Activated CD4-positive, alpha-beta memory T cell treated with anti-CD3 and anti-CD28 coated beads, Interleukin-2, amount 10 ng/mL, durations not matched to agents 7 days and 5 days (primary cell): ENCODE measurements at regions of chr2 and their contacts with region 1.

Region 1: GRCh38 chr2:9555297-9556141 is at the start of gene ADAM17:
- DNase-seq: peak; percentile 92
- H3K4me3 Mint-ChIP-seq: peak within 1 kb of the TSS; percentile 97
- H3K27ac Mint-ChIP-seq: peak within 1 kb of the TSS; percentile 94
- H3K4me1 Mint-ChIP-seq: peaks cover 58% of the 10 kb centered on the region
- H3K27me3 Mint-ChIP-seq: no peaks in the 10 kb centered on the region
- total RNA-seq, gene ADAM17: 28.9 to 31.0 TPM

Region 2: GRCh38 chr2:9463698-9464034 is 91.9 kb before region 1 on chr2:
- CTCF ChIA-PET with region 1: no interaction called
- POLR2A ChIA-PET with region 1: no interaction called
- DNase-seq: peak; percentile 56
- H3K4me3 Mint-ChIP-seq: no peak overlapping the region
- H3K27ac Mint-ChIP-seq: peak overlapping the region; percentile 77
- H3K4me1 Mint-ChIP-seq: peaks cover 14% of the 10 kb centered on the region
- H3K27me3 Mint-ChIP-seq: no peaks in the 10 kb centered on the region

Region 3: DNA sequence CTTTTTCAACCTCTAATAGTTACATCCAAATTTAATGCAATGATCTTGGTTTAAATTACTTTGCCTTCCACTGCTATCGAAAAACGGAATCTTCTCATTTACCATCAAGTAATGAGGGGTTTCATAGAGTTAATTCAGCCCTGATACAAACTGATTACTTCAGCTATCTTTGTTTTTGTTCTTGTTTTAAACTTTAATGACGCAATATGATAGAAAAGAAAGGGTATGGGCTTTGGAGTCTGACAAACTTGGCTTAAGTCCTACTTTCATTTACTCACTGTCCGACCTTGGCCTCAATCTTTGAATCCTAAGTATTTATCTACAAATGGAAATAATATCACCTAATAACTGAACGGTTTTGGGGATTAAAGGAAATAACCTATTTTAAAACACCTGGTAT is 16.0 kb before region 1 on chr2:
- CTCF ChIA-PET with region 1: interaction called, 3 read pairs
- POLR2A ChIA-PET with region 1: interaction called, 14 read pairs
- DNase-seq: no peak
- H3K4me3 Mint-ChIP-seq: no peak overlapping the region
- H3K27ac Mint-ChIP-seq: no peak overlapping the region
- H3K4me1 Mint-ChIP-seq: peaks cover 24% of the 10 kb centered on the region
- H3K27me3 Mint-ChIP-seq: no peaks in the 10 kb centered on the region

Region 4: GRCh38 chr2:9594366-9595054 is 39.0 kb after region 1 on chr2:
- CTCF ChIA-PET with region 1: interaction called, 8 read pairs
- POLR2A ChIA-PET with region 1: interaction called, 30 read pairs
- DNase-seq: no peak
- H3K4me3 Mint-ChIP-seq: peak overlapping the region; percentile 22
- H3K27ac Mint-ChIP-seq: peak overlapping the region; percentile 66
- H3K4me1 Mint-ChIP-seq: peaks cover 65% of the 10 kb centered on the region
- H3K27me3 Mint-ChIP-seq: no peaks in the 10 kb centered on the region

Region 5: GRCh38 chr2:9656270-9656766 is 100.8 kb after region 1 on chr2:
- CTCF ChIA-PET with region 1: no interaction called
- POLR2A ChIA-PET with region 1: interaction called, 10 read pairs
- DNase-seq: peak; percentile 88
- H3K4me3 Mint-ChIP-seq: peak overlapping the region; percentile 63
- H3K27ac Mint-ChIP-seq: peak overlapping the region; percentile 96
- H3K4me1 Mint-ChIP-seq: peaks cover 57% of the 10 kb centered on the region
- H3K27me3 Mint-ChIP-seq: no peaks in the 10 kb centered on the region

Region 6: DNA sequence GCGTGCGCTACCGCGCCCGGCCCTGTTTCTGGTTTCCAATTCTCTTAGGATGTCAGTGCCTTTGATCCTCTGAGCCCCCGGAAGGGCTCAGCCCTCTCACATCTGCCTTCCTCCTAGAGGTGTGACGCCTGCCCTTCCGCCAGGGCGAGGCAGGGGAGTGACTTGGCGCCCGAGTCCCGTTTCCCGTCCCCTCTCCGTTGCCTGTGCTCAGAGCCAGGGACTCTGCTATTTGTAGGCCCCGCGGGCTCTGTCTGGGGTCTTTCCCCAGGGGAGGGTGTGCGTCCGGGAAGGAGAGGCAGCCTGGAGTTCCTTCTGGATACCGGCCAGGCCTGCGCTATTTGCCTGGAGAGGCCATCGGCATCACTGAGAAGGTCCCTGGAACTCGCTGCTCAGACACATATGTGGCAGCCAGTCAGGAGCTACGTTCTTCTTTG is 184.0 kb after region 1 on chr2:
- CTCF ChIA-PET with region 1: no interaction called
- POLR2A ChIA-PET with region 1: interaction called, 14 read pairs
- DNase-seq: peak; percentile 77
- H3K4me3 Mint-ChIP-seq: peak overlapping the region; percentile 72
- H3K27ac Mint-ChIP-seq: peak overlapping the region; percentile 93
- H3K4me1 Mint-ChIP-seq: peaks cover 61% of the 10 kb centered on the region
- H3K27me3 Mint-ChIP-seq: peaks cover 2% of the 10 kb centered on the region

Region 7: DNA sequence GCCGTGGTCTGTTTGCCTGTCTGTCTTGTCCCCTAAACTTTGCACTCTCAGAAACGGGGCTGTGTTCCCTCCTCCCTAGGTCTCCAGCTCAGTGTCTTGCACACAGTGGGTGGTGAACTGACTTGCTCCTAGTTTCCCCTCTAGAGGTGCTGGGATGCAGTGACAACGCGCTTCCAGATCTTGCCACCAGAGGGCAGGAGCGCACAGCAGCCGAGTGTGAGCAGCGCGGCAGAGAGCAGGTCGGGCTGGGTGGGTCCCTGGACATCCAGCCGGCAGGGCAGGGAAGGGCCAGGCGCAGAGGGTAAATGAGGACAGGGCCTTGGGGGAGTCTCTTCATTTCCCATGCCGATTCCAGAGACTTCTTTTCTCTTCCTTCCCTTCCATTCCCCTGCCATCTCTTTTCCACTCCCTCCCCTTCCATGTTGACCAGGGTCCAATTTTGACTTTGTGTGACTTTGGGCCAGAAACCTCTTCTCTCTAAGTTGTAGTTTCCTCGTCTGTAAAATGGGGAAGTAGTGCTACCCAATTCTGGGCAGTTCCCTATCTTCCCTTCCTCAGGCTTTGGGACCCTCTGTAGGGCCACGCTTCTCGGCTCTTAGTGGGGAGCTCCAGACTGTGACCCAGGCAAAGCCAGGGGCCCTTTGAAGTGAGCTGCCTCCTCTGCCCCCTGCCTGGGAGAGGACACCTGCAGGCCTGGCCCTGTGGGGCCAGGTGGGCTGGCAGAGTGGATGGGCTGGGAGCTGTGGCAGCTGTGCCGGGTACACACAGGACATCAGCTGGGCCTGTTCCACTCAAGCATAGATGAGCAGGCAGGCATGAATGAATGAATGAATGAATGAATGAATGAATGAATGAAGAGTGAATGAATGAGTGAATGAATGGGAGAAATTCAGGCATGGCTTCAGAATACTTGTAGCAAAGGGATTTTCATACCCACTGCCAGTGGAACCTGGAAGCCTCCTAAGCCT is 244.4 kb after region 1 on chr2:
- CTCF ChIA-PET with region 1: interaction called, 6 read pairs
- POLR2A ChIA-PET with region 1: interaction called, 14 read pairs
- DNase-seq: peak; percentile 92
- H3K4me3 Mint-ChIP-seq: peak overlapping the region; percentile 72
- H3K27ac Mint-ChIP-seq: peak overlapping the region; percentile 98
- H3K4me1 Mint-ChIP-seq: peaks cover 49% of the 10 kb centered on the region
- H3K27me3 Mint-ChIP-seq: no peaks in the 10 kb centered on the region